Activated naive CD4-positive, alpha-beta T cell treated with anti-CD3 and anti-CD28 coated beads for 36 hours (primary cell): ENCODE measurements at regions of chr3 and their contacts with region 1.

Region 1: DNA sequence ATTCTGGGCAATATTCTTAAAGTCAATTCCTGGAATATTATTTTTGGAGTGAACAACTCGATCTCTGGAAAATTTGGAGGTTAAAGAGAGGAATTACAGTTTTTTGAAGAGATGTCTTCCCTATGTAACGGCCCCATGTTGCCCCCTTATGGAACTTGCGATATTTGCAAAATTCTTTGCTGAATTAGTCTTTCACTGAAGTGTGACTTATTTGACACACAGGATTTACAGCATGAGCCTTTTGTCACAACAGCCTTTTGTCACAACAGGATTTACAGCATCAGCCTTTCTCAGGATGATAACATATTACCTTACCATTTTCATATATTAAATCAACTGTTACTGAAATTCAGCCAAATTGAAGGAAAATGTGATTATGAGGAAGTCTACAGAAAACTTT is 37.8 kb upstream of the SPTSSB start:
- DNase-seq: peak; percentile 63
- H3K4me3 Mint-ChIP-seq: no peak overlapping the region
- H3K27ac Mint-ChIP-seq: no peak overlapping the region
- H3K4me1 Mint-ChIP-seq: peaks cover 20% of the 10 kb centered on the region
- H3K27me3 Mint-ChIP-seq: no peaks in the 10 kb centered on the region

Region 2: DNA sequence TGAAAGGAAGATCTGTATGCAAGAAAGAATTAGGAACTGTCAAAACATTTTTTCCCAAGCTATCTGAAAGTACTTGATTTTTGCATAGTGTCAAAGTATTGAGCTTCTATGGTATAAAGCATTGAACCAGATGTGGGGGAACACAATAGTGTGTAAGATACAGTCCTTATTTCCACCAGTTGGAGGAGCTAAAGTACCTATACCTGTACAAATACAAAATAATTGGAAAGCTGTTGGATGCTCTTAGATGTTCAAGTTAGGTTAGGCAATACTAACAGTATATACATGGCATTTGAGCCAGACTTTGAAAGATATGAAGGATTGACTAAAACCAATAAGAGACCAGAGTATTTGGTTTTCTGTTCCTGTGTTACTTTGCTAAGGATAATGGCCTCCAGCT is 452.3 kb before region 1 on chr3:
- CTCF ChIA-PET with region 1: no interaction called
- intact Hi-C with region 1: loop called (anchors 1 kb)
- DNase-seq: no peak
- H3K4me3 Mint-ChIP-seq: no peak overlapping the region
- H3K27ac Mint-ChIP-seq: no peak overlapping the region
- H3K4me1 Mint-ChIP-seq: no peaks in the 10 kb centered on the region
- H3K27me3 Mint-ChIP-seq: no peaks in the 10 kb centered on the region

Region 3: GRCh38 chr3:161096771-161097355 is 312.2 kb before region 1 on chr3:
- CTCF ChIA-PET with region 1: interaction called, 4 read pairs
- intact Hi-C with region 1: loop called (anchors 5 kb)
- DNase-seq: peak; percentile 41
- H3K4me3 Mint-ChIP-seq: no peak overlapping the region
- H3K27ac Mint-ChIP-seq: no peak overlapping the region
- H3K4me1 Mint-ChIP-seq: no peaks in the 10 kb centered on the region
- H3K27me3 Mint-ChIP-seq: no peaks in the 10 kb centered on the region

Region 4: GRCh38 chr3:161305095-161305991 is 103.7 kb before region 1 on chr3:
- CTCF ChIA-PET with region 1: interaction called, 10 read pairs
- intact Hi-C with region 1: loop called (anchors 1 kb)
- DNase-seq: peak; percentile 12
- H3K4me3 Mint-ChIP-seq: no peak overlapping the region
- H3K27ac Mint-ChIP-seq: no peak overlapping the region
- H3K4me1 Mint-ChIP-seq: peaks cover 22% of the 10 kb centered on the region
- H3K27me3 Mint-ChIP-seq: no peaks in the 10 kb centered on the region

Region 5: DNA sequence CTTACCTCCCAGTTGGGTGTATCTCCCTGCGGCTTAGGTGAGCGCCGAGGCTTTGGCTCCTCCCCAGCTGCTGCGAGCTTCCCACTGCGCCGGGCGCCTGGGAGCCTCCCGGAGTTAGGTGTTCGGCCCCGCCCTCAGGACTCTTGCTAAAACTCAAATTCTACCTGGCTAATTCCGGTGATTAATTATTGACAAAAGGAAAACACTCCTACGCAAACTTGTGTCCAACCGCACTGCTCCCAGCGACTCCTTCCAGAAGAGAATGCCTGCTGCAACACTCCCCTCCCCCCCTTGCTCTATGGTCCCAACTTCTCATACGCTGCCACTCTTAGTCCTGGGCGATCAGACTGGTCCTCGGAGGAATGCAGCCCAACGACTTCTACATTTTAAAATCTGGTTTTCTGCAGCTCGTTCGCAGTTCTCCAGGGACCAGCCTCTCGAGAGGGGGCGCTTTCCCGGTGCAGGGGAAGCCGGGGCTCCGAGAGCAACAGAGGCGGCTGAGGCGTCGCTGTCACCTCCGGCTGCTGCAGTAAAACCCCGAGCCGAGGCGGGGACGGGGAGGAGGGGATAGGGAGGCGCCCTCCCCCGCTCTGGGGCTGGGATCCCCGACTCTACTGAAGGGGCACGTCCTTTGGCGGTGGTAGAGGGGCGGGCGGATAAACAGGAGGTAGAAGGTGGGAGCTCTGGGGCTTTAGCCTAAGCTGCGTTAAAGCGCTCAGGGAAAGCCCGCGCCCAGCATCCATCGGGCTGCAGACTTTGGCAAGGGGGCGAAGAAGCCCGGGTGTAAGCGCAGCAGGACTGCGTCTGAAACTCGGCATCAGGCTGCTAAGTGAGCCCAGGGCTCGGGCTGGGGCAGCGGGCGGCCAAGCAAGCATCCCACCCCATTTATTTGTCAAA is 37.4 kb before region 1 on chr3 and contains the start of gene SPTSSB:
- CTCF ChIA-PET with region 1: no interaction called
- intact Hi-C with region 1: loop called (anchors 1 kb)
- DNase-seq: peak; percentile 60
- H3K4me3 Mint-ChIP-seq: peak within 1 kb of the TSS; percentile 79
- H3K27ac Mint-ChIP-seq: no peak within 1 kb of the TSS
- H3K4me1 Mint-ChIP-seq: peaks cover 8% of the 10 kb centered on the region
- H3K27me3 Mint-ChIP-seq: peaks cover 22% of the 10 kb centered on the region
- total RNA-seq, gene SPTSSB: not detected

Region 6: GRCh38 chr3:162041622-162042021 is 632.6 kb after region 1 on chr3:
- CTCF ChIA-PET with region 1: no interaction called
- intact Hi-C with region 1: no loop called
- DNase-seq: no peak
- H3K4me3 Mint-ChIP-seq: no peak overlapping the region
- H3K27ac Mint-ChIP-seq: no peak overlapping the region
- H3K4me1 Mint-ChIP-seq: no peaks in the 10 kb centered on the region
- H3K27me3 Mint-ChIP-seq: no peaks in the 10 kb centered on the region